Left ventricle myocardium inferior (tissue), 1 donor: ENCODE measurements at regions of chr2 and their contacts with region 1.

Region 1: DNA sequence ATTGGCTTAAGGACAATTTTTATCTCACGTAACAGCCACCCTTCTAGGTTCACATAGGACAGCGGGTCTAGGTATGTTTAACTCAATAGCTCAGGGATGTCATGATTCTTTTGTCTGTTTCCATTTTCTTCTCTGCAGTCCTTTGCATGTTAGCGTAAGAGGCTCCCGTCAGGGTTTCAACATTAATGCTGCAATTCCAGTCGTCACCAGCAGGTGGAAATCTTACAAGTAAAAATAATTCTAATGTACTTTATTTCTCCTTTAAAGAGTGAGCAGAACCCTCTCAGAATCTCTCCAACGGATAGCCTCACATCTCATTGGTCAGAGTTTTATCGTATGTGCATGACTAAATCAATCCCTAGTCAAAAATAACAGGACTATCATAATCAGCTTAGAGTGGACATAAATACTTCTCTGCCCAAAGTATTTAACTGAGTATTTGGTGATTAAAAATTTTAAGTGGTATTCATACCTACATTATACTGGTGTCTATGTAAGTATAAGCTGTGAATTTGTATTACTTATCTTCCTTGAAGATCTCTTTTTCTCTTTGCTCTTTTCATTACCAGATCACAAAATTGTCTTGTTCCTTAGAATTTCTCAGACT is 487.2 kb upstream of the GCFC2 start:
- DNase-seq: peak; percentile 14
- H3K4me3 ChIP-seq: no peak overlapping the region
- H3K27ac ChIP-seq: no peak overlapping the region
- H3K4me1 ChIP-seq: no peaks in the 10 kb centered on the region
- H3K27me3 ChIP-seq: peaks cover 8% of the 10 kb centered on the region
- CTCF ChIP-seq: peak; percentile 85

Region 2: DNA sequence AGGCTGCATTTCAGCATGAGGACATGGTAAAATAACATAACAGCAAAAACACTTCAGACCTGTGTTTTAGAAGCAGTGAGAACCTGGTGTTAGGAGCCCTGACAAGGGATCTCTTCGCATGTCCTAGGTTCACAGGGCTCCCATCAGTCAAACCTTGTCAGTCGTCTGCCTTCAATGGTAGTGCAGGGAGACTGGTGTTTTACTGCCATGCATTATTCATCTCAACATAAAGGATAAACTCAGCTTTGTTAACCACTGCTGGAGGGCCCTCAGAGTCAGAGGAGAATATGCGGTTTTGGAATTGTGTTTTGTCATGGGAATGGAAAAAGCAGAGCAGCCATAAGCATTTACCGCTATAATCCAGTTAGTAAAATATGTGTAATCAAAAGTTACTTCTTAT is 211.3 kb before region 1 on chr2:
- intact Hi-C with region 1: no loop called
- DNase-seq: no peak
- H3K4me3 ChIP-seq: no peak overlapping the region
- H3K27ac ChIP-seq: no peak overlapping the region
- H3K4me1 ChIP-seq: no peaks in the 10 kb centered on the region
- H3K27me3 ChIP-seq: no peaks in the 10 kb centered on the region
- CTCF ChIP-seq: no peak

Region 3: GRCh38 chr2:76050196-76050595 is 147.7 kb before region 1 on chr2:
- intact Hi-C with region 1: no loop called
- DNase-seq: no peak
- H3K4me3 ChIP-seq: no peak overlapping the region
- H3K27ac ChIP-seq: no peak overlapping the region
- H3K4me1 ChIP-seq: no peaks in the 10 kb centered on the region
- H3K27me3 ChIP-seq: no peaks in the 10 kb centered on the region
- CTCF ChIP-seq: no peak

Region 4: DNA sequence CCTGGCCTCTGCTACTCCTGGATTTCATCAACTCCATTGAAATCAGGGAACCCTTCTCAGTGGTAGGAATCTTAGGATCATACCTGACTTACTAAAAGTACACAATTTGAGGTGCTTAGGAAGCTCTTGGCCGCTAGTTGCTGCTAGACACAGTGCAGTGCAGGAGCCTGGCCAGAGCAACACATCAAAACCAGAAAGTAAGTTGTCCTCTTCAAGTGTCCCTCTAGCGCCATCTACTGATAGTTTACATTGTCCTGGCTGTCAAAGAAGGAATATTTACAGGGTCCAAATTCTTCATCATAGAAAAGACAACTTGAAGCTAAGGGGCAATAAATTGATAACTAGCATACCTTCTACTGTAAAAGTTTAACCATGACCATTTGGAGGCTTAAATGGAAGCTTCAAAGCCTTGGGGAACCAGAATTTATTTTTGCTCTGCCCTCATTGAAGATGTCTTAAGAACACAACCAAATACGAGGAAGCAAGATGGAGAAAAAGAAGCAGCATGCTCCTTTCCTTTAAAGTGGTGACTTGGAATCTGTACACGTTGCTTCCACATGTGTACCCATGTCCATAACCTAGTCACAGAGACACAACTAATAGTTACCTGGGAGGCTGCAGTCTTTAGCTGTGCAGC is 401.9 kb after region 1 on chr2:
- intact Hi-C with region 1: loop called (anchors 10 kb)
- DNase-seq: no peak
- H3K4me3 ChIP-seq: no peak overlapping the region
- H3K27ac ChIP-seq: no peak overlapping the region
- H3K4me1 ChIP-seq: no peaks in the 10 kb centered on the region
- H3K27me3 ChIP-seq: no peaks in the 10 kb centered on the region
- CTCF ChIP-seq: peak; percentile 83